ENCODE measurements at regions of chr4 and their contacts with region 1.

Region 1: DNA sequence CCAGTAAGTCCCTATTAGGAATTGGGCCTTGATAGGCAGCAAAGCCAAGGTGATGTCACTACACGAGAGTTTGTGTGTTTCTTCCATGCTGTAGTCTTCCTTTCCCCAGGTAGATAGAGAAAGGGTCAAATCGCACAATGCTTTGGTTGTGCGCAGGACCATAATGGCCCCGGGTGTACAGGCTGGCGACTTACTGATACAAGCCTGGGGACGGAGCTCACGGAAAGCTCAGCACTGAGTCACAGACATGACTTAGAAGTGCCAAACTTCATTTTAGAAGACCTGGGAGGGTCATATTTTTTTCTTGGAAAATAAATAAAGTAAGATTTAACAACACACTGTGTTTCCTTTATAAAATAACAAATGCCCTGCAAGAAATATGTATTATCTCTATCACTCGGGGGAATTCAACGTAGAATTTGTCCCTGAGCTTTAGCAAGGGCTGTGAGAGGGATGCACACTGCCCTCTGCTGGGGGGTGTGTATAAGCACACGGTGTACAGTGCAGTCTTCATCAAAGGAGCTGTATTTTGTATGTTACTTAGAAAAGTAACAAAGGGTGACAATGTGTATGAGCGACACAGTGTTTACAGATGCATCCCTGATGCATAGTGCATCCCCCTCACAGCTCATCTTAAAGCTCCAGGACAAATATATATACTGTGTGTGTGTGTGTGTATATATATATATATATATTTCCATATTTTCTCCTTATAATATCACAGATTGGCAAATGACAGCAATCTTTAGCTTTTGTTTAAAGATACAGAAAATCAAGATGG is 254.5 kb upstream of the VEGFC start:
- DNase-seq: peak; percentile 49
- H3K4me3 ChIP-seq: no peak overlapping the region
- H3K27ac ChIP-seq: no peak overlapping the region
- H3K4me1 ChIP-seq: no peaks in the 10 kb centered on the region
- H3K27me3 ChIP-seq: no peaks in the 10 kb centered on the region
- CTCF ChIP-seq: peak; percentile 85 to 88

Region 2: GRCh38 chr4:176357359-176358082 is 689.7 kb before region 1 on chr4:
- CTCF ChIA-PET with region 1: no interaction called
- dilution Hi-C with region 1: no loop called
- in situ Hi-C with region 1: loop called in 1 of 2 experiments (anchors 25 kb)
- intact Hi-C with region 1: no loop called
- DNase-seq: no peak
- H3K4me3 ChIP-seq: no peak overlapping the region
- H3K27ac ChIP-seq: no peak overlapping the region
- H3K4me1 ChIP-seq: peaks cover 5% of the 10 kb centered on the region
- H3K27me3 ChIP-seq: no peaks in the 10 kb centered on the region
- CTCF ChIP-seq: no peak

Region 3: DNA sequence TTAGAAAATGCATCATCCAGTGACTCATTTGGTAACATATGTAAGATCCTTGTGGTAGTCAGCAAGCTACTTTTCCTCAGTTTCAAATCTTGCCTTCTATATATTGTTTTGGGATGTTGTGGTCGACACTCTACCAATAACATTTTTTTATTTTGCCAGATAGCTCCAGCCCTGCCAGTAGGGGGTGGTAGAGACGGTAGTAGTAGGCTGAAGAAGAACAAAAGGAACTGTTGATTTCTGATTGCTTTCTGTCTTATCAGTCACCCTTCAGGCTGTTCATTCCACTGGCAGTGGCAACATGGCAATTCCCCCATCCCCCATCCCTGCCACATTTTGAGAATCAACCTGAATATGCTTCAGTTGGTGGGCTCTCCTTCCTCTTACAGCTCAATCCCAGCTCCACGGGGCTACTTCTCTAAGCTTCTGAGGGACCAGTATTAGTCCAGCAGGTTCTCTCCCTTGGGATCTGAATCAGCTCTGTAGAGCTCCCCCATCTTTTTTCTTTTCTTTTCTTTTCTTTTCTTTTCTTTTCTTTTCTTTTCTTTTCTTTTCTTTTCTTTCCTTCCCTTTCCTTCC is 83.1 kb before region 1 on chr4:
- CTCF ChIA-PET with region 1: interaction called, 26 read pairs
- dilution Hi-C with region 1: loop called (anchors 5 kb)
- in situ Hi-C with region 1: no loop called
- intact Hi-C with region 1: loop called (anchors 1 kb)
- DNase-seq: peak; percentile 32
- H3K4me3 ChIP-seq: no peak overlapping the region
- H3K27ac ChIP-seq: no peak overlapping the region
- H3K4me1 ChIP-seq: no peaks in the 10 kb centered on the region
- H3K27me3 ChIP-seq: no peaks in the 10 kb centered on the region
- CTCF ChIP-seq: peak; percentile 46 to 63

Region 4: DNA sequence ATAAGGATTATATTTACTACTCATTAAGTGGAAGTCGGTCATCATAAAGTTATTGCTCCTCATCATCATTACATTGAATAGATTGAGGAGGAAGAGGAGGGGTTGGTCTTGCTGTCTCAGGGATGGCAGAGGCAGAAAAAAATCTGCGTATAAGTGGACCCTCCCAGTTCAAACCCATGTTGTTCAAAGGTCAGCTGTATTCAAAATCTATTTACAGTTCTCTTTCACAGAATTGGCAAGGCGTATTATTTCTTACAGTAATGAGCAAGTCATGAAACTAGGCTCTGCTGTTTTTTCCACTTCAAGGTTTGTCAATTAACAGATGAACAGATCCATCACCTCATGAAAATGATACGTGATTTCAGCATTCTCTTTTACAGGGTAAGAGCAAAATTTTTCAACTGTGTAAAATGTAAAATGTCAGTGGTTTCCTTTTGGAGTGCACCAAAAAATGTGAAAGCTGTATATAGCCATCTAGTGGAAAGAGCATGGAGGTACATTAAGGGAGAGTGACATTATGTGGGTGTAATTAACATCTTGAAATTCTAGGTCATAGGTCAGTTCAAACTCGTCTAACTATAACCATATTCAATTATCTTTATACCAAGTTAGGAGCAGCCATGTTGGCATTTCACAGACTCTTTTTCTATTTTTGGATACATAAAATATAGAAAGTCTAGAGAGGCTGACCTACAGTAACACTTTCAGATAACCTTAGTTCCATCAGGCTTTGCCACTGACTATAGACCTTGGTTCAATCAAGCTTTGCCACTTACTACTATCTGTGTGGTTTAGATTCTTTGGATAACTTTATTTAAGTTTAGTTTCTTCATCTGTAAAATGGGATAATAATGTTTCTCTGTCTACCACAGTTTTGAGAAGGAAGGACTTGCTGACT is 292.5 kb after region 1 on chr4:
- CTCF ChIA-PET with region 1: no interaction called
- dilution Hi-C with region 1: no loop called
- in situ Hi-C with region 1: no loop called
- intact Hi-C with region 1: loop called (anchors 1 kb)
- DNase-seq: peak; percentile 35
- H3K4me3 ChIP-seq: no peak overlapping the region
- H3K27ac ChIP-seq: no peak overlapping the region
- H3K4me1 ChIP-seq: no peaks in the 10 kb centered on the region
- H3K27me3 ChIP-seq: no peaks in the 10 kb centered on the region
- CTCF ChIP-seq: peak; percentile 70 to 77

Region 5: GRCh38 chr4:177427192-177427591 is 379.9 kb after region 1 on chr4:
- CTCF ChIA-PET with region 1: interaction called, 11 read pairs
- dilution Hi-C with region 1: no loop called
- in situ Hi-C with region 1: no loop called
- intact Hi-C with region 1: no loop called
- DNase-seq: no peak
- H3K4me3 ChIP-seq: no peak overlapping the region
- H3K27ac ChIP-seq: no peak overlapping the region
- H3K4me1 ChIP-seq: no peaks in the 10 kb centered on the region
- H3K27me3 ChIP-seq: no peaks in the 10 kb centered on the region
- CTCF ChIP-seq: no peak

Region 6: DNA sequence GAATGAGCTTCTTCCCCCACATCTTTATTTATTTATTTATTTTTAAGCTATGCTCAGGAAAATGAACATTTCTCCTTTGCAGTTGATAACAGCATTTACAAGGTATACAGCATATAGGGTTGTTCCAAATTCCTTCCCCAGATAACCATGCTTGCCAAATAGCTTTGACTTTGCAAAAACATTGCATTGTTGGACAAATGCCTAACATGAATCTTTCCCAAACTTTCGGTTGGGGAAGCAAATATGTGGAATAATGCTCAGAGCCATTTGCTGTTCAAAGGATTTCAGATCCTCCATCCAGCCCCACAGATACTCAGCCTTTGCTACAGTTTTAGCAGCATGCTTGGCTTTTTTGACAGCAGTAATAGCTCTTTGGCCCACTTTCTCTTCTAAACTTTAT is 522.2 kb after region 1 on chr4:
- CTCF ChIA-PET with region 1: no interaction called
- dilution Hi-C with region 1: no loop called
- in situ Hi-C with region 1: no loop called
- intact Hi-C with region 1: no loop called
- DNase-seq: no peak
- H3K4me3 ChIP-seq: no peak overlapping the region
- H3K27ac ChIP-seq: no peak overlapping the region
- H3K4me1 ChIP-seq: peaks cover 4% of the 10 kb centered on the region
- H3K27me3 ChIP-seq: no peaks in the 10 kb centered on the region
- CTCF ChIP-seq: no peak

Measured in mammary epithelial cell (primary cell).